Activated CD4-positive, alpha-beta memory T cell treated with anti-CD3 and anti-CD28 coated beads, Interleukin-2, amount 10 ng/mL, durations not matched to agents 7 days and 5 days (primary cell): ENCODE measurements at regions of chr3 and their contacts with region 1.

Region 1: DNA sequence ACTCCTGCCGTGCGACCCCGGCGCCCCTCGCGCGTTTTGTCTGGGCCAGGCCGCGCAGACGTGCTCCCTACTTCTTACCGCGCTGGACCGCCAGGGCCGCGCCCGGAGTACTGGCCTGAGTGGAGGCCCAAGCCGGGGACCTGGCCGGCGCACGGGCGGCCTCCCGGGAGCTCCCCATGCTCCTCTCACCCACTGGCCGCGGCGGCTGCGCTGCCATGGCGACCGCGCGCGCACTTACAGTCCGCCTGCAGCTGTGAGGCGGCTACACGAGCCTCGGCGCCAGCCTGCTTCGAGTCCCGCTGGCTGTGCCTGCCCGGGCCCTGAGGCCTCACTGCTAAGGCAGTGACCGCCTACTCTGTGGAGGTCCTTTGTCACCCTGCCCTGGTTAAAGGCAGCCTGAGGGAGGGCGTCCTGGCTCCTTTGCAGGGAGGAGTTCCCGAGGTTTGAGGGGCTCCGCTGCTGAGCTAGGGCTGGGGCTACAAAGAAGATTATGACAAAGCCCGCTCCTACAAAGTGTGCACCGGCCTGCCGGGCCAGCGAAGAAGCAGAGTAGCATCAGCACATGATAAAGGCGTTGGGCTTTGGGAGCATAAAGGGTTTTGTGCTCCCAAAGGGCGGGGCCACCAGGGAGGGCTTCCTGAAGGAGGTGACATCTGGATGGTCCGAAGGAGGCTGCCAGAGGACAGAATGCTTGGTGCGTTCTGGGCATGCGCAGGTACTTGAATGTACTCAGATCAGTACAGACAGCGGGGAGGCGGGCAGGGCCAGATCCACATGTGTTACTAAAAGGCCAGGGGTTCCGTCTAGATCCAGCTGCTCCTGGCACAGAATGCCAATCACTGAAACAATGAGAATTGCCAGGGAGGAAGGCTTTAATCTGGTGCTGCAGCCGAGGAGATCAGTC is at the starts of genes LRRC34 and LRRIQ4:
- DNase-seq: peak; percentile 85
- H3K4me3 Mint-ChIP-seq: peak within 1 kb of the TSS; percentile 70
- H3K27ac Mint-ChIP-seq: peak within 1 kb of the TSS; percentile 83
- H3K4me1 Mint-ChIP-seq: peaks cover 53% of the 10 kb centered on the region
- H3K27me3 Mint-ChIP-seq: peaks cover 13% of the 10 kb centered on the region
- total RNA-seq, gene LRRC34: 5.6 to 6.0 TPM
- total RNA-seq, gene LRRIQ4: not detected

Region 2: GRCh38 chr3:169772897-169773828 is 39.4 kb before region 1 on chr3 and contains the start of gene MYNN:
- CTCF ChIA-PET with region 1: interaction called, 10 read pairs
- POLR2A ChIA-PET with region 1: interaction called, 83 read pairs
- DNase-seq: peak; percentile 93
- H3K4me3 Mint-ChIP-seq: peak within 1 kb of the TSS; percentile 93
- H3K27ac Mint-ChIP-seq: peak within 1 kb of the TSS; percentile 100
- H3K4me1 Mint-ChIP-seq: peaks cover 43% of the 10 kb centered on the region
- H3K27me3 Mint-ChIP-seq: no peaks in the 10 kb centered on the region
- total RNA-seq, gene MYNN: 14.9 to 15.6 TPM

Region 3: DNA sequence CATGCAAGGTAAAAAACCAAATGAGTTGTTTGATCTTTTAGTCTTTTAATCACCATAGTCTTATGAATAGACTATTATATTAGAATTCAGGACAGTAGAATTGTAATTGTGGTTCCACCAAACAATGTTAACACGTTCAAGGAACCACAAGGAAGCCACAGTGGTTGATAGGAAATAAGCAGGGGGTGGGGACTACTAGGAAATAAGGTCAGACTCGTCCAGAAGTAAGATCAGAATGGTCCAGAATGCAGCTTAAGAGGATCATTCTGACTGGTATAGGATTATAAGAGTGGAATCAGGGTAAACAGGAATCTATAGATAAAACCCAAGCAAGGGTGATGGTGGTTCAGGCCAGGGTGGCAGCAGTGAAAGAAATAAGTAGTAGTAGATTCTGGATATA is 31.8 kb before region 1 on chr3:
- CTCF ChIA-PET with region 1: no interaction called
- POLR2A ChIA-PET with region 1: interaction called, 13 read pairs
- DNase-seq: peak; percentile 37
- H3K4me3 Mint-ChIP-seq: peak overlapping the region; percentile 56
- H3K27ac Mint-ChIP-seq: peak overlapping the region; percentile 79
- H3K4me1 Mint-ChIP-seq: peaks cover 54% of the 10 kb centered on the region
- H3K27me3 Mint-ChIP-seq: no peaks in the 10 kb centered on the region